Prostate gland (tissue), 2 donors: ENCODE measurements at regions of chr18 and their contacts with region 1.

Region 1: DNA sequence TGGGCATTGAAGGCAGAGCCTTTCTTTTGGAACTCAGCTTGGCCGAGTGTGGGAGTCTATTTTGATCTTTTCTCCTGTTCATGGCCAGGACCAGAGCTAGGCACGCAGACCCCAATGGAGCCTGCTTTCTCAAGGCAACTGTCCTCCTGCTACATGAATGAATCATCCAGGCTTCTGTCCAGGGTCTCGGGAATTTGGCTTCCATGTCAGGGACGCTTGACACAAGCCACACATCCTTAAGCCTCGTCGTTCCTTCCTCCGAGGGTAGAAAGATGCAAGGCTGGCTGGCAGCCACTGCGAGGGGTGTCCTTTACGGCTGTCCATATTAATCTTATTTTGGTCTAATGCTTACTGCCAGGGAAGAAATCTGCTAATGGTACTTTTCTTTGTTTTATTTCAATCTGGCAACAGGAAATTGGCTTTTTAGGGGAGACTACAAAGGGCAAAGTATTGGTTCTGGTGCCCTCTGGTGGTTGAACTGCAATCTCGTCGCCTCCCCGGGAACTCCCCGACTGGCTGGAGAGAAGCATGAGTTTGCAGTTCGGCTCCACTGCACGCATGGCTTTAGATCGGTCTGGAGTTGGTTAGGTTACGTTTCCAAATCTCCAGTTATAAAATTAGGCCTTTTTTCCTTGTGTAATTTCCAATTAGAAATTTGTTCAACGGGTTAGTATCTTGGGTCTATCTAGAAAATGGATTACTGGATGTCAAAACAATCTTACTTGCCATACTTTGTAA is 135.2 kb downstream of the ALPK2 start:
- DNase-seq: peak; percentile 71
- H3K4me3 ChIP-seq: no peak overlapping the region
- H3K27ac ChIP-seq: peak overlapping the region in 1 of 2 donors; percentile 26
- H3K4me1 ChIP-seq: no peaks in the 10 kb centered on the region
- H3K27me3 ChIP-seq: no peaks in the 10 kb centered on the region
- CTCF ChIP-seq: peak; percentile 75 to 89 (median 86)
- POLR2A ChIP-seq: no peak

Region 2: DNA sequence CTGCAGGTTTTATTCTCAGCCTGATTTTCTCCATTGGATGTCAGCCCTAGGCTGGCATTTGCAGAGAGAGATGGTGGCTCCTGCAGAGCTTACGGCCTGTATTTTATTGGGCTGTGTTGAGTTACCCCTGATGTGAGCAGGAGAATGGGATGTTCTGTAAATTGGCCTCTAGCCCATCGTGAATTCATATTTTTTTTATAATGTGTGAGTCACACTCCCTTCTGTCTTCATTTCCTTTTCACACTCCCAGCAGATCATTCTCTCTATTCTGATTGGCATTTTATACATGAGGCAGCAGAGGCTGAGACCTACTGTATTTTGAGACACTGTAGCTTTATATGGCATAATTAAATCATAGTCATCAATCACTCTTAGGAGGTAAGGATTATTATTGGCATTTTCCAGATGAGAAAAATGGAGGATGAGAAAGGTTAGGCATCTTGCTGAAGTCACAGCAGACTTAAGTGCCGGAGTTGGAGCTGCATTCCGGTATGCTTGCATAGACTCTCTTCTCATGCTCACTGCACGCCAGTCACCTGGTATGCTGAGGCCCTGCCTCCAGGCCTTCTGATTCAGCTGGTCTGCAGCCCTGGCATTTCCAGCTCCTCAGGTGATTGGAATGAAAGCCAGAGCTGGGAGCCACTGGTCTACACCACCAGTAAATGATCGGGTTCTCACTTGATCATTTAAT is 307.3 kb before region 1 on chr18:
- intact Hi-C with region 1: loop called (anchors 5 kb)
- DNase-seq: peak; percentile 28
- H3K4me3 ChIP-seq: no peak overlapping the region
- H3K27ac ChIP-seq: peak overlapping the region in 1 of 2 donors; percentile 1
- H3K4me1 ChIP-seq: peaks cover 27% of the 10 kb centered on the region
- H3K27me3 ChIP-seq: no peaks in the 10 kb centered on the region
- CTCF ChIP-seq: no peak
- POLR2A ChIP-seq: no peak

Region 3: DNA sequence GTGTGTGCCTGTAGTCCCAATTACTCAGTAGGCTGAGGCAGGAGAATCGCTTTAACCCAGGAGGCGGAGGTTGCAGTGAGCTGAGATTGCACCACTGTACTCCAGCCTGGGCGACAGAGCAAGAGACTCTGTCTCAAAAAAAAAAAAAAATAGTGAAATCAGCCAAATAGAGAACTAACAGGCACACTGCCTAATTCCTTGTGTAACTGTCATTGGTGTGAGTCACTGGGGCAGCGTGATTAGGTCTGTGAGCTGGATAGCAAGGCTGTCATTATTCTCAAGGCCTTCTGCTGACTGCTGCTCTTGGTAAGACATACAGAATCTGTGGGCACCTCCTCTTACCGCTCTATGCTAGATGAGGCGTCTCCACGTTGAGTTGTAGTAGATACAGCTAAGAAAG is 179.4 kb before region 1 on chr18:
- intact Hi-C with region 1: loop called (anchors 10 kb)
- DNase-seq: peak; percentile 68
- H3K4me3 ChIP-seq: no peak overlapping the region
- H3K27ac ChIP-seq: peak overlapping the region; percentile 59 to 66
- H3K4me1 ChIP-seq: peaks cover 27% of the 10 kb centered on the region
- H3K27me3 ChIP-seq: no peaks in the 10 kb centered on the region
- CTCF ChIP-seq: no peak
- POLR2A ChIP-seq: peak; percentile 12

Region 4: DNA sequence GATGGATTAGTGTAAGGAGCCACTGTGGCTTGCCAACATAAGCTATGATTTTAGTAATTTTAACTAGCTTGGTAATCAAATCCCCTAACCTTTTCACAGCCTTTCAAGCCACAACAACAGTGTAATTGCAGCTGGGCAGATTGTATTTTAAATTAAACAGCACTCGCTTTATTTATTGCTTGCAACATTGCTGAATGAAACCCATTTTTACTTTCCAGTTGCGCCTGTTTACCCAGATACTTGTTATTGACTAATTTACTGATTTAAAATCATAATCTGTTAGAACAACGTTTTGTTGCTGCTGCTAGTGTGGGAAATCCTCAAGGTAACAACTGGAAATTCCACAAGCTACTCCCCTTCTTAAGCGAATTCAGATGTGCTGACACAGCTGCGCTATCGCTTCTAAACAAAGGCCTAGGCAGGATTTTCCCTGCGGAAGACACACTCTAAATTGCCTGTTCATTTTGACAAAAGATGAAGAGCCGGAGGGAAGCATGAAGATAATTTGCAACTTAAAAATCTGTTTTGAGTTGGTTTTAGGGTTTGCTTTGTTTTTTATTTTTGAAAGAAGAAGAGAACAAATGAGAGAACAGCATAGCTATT is 148.7 kb before region 1 on chr18:
- intact Hi-C with region 1: loop called (anchors 10 kb)
- DNase-seq: no peak
- H3K4me3 ChIP-seq: no peak overlapping the region
- H3K27ac ChIP-seq: no peak overlapping the region
- H3K4me1 ChIP-seq: peaks cover 7% of the 10 kb centered on the region
- H3K27me3 ChIP-seq: no peaks in the 10 kb centered on the region
- CTCF ChIP-seq: no peak
- POLR2A ChIP-seq: no peak